ENCODE measurements at regions of chr1 and their contacts with region 1.

Region 1: DNA sequence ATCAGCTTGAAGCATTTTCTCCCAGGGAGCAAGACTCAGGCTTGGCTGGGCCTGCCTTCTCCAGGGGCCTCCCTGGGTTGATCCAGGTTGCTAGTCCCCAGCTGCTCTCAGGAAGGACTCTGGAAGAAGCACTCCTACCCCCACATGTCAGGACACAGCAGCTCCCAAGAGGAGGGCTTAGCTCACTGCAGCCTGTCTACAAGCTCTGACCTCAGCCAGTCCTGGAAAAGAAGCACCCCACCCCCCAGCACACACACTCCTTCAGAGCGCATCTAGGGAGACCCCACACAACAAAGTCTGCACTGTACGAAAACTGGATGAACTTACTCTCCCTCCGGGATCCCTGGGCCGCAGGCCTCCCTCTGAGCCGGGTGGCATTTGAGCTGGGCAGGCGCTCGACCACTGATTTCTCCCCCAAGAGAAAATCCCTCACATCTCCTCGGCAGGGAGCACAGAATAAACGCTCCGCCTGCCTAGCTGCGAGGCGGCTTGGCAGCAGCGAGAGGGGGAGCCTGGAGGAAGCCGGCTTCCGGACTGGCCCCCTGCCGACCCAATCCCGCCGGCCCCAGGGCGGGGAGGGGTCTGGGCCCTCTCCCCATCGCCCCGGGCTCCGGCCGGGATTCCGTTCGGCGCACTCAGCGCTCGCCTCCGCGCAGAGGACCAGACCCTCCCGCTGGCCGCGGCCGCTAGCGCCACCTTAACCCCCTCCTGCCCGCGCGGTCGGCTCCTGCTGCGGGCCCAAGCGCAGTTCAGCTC is at the start of gene KCNA2:
- DNase-seq: no peak
- total RNA-seq, gene KCNA2: 1.00 to 2.7 TPM

Region 2: DNA sequence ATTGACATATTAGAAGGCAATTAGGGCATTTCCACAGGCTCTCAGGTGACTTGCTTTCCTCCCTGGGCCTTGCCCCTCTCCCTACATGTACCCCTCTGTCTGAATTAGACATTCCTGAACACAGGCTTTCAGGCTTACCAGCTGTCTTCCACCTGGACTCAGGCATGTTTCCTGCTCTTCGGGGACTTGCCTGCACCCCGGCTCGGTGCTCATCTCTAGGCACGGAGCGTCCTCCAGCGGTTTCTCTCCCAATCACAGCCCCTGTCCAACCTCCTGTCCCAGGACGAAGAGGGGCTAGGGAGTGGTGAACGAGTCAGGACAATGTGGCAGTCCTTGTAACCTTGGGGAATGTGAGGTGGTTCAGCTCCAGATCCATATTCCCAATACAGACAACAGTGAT is 150.9 kb before region 1 on chr1:
- intact Hi-C with region 1: no loop called
- DNase-seq: peak; percentile 38

Region 3: GRCh38 chr1:110554871-110555801 is 50.9 kb before region 1 on chr1:
- intact Hi-C with region 1: loop called in 1 of 2 experiments (anchors 10 kb)
- DNase-seq: no peak